Mammary epithelial cell (primary cell): ENCODE measurements at regions of chr9 and their contacts with region 1.

Region 1: DNA sequence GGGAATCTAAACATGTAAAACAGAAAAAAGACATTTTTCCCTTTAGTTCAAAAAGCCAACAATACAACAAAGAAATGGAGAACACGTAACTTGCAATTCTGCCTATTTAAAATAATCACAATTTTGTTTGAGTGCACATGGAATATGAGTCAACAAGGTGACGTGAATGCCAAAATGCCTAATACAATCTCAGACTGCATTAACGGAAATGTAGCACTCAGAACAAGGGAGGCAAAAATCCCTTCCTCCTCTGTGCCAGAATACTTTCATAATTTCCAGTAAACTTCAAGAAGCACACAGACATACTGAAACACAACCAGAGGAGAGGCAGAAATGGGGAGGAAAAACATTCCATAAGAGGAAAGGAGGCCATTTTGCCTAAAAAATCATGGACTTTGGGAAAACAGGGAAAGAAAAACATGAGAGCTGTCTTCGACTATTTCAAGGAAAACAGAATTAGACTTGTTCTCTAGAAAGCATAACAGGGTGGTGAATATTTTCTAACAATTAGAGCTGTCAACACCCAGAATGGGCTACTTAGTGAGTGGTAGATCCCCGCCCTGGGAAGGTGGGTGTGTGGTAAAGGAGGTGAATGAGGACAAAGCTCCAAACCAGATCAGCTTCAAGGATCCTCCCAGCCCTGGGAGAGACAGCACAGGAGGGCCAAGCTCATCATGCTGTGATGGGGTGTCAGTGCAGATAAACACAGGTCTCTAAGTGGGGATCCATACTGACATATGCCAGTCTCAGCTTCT is 48.2 kb downstream of the ABCA1 start:
- DNase-seq: no peak
- H3K4me3 ChIP-seq: no peak overlapping the region
- H3K27ac ChIP-seq: no peak overlapping the region
- H3K4me1 ChIP-seq: no peaks in the 10 kb centered on the region
- H3K27me3 ChIP-seq: no peaks in the 10 kb centered on the region
- CTCF ChIP-seq: no peak

Region 2: GRCh38 chr9:104915753-104916152 is 36.0 kb after region 1 on chr9:
- CTCF ChIA-PET with region 1: no interaction called
- dilution Hi-C with region 1: loop called (anchors 5 kb)
- in situ Hi-C with region 1: no loop called
- intact Hi-C with region 1: no loop called
- DNase-seq: no peak
- H3K4me3 ChIP-seq: no peak overlapping the region
- H3K27ac ChIP-seq: no peak overlapping the region
- H3K4me1 ChIP-seq: peaks cover 7% of the 10 kb centered on the region
- H3K27me3 ChIP-seq: no peaks in the 10 kb centered on the region
- CTCF ChIP-seq: no peak

Region 3: GRCh38 chr9:104987743-104988142 is 108.0 kb after region 1 on chr9:
- CTCF ChIA-PET with region 1: no interaction called
- dilution Hi-C with region 1: no loop called
- in situ Hi-C with region 1: no loop called
- intact Hi-C with region 1: no loop called
- DNase-seq: peak; percentile 54
- H3K4me3 ChIP-seq: no peak overlapping the region
- H3K27ac ChIP-seq: no peak overlapping the region
- H3K4me1 ChIP-seq: peaks cover 13% of the 10 kb centered on the region
- H3K27me3 ChIP-seq: no peaks in the 10 kb centered on the region
- CTCF ChIP-seq: no peak